ENCODE measurements at regions of chr6 and their contacts with region 1.

Region 1: GRCh38 chr6:52297433-52297832 is 12.9 kb upstream of the MCM3 start:
- DNase-seq: peak; percentile 51
- H3K4me3 Mint-ChIP-seq: no peak overlapping the region
- H3K27ac Mint-ChIP-seq: peak overlapping the region; percentile 60
- H3K4me1 Mint-ChIP-seq: peaks cover 35% of the 10 kb centered on the region
- H3K27me3 Mint-ChIP-seq: no peaks in the 10 kb centered on the region

Region 2: GRCh38 chr6:52984247-52984646 is 686.8 kb after region 1 on chr6:
- CTCF ChIA-PET with region 1: no interaction called
- intact Hi-C with region 1: loop called (anchors 5 kb)
- DNase-seq: peak; percentile 81
- H3K4me3 Mint-ChIP-seq: no peak overlapping the region
- H3K27ac Mint-ChIP-seq: peak overlapping the region; percentile 82
- H3K4me1 Mint-ChIP-seq: peaks cover 63% of the 10 kb centered on the region
- H3K27me3 Mint-ChIP-seq: peaks cover 8% of the 10 kb centered on the region

Measured in activated naive CD4-positive, alpha-beta T cell treated with anti-CD3 and anti-CD28 coated beads for 36 hours (primary cell).